Left colon (tissue), 2 donors: ENCODE measurements at regions of chr14 and their contacts with region 1.

Region 1: GRCh38 chr14:61252369-61253063 is 28.6 kb downstream of the TMEM30B start:
- DNase-seq: peak; percentile 51 to 64
- ATAC-seq: peak; percentile 99

Region 2: GRCh38 chr14:60349663-60350365 is 902.7 kb before region 1 on chr14:
- intact Hi-C with region 1: loop called in 1 of 2 experiments (anchors 10 kb)
- DNase-seq: peak in 1 of 2 donors; percentile 16
- ATAC-seq: peak; percentile 59

Region 3: GRCh38 chr14:60622917-60623257 is 629.6 kb before region 1 on chr14:
- intact Hi-C with region 1: loop called in 1 of 2 experiments (anchors 5 kb)
- DNase-seq: no peak
- ATAC-seq: no peak

Region 4: GRCh38 chr14:61080591-61081010 is 171.9 kb before region 1 on chr14:
- intact Hi-C with region 1: no loop called
- DNase-seq: no peak
- ATAC-seq: no peak